ENCODE measurements at regions of chr10 and their contacts with region 1.

Region 1: GRCh38 chr10:124741281-124741921 is 2.8 kb downstream of the FAM53B start:
- DNase-seq: peak; percentile 84
- H3K4me3 Mint-ChIP-seq: peak overlapping the region; percentile 52
- H3K27ac Mint-ChIP-seq: peak overlapping the region; percentile 68
- H3K4me1 Mint-ChIP-seq: peaks cover 68% of the 10 kb centered on the region
- H3K27me3 Mint-ChIP-seq: peaks cover 2% of the 10 kb centered on the region

Region 2: DNA sequence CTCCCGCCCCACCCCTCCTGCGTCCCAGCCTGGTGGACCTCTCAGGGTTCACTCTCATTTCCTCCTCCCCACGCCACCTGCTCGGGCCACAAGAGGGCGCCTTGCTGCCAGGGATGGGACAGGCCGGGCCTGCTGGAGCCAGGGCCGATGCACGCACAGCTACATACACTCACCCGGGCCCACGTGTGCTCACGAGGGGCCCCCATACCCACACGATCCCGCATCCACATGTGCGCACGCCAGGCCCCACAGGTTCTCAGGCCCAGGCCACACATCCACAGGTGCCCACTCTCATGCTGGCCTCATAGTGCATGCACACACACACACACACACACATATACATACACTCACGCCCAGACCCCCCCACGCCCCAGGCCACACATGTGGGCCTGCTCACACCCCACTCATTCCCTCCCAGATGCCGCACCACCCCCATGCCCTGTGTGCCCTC is 211.2 kb before region 1 on chr10:
- CTCF ChIA-PET with region 1: interaction called, 19 read pairs
- intact Hi-C with region 1: loop called (anchors 1 kb)
- DNase-seq: peak; percentile 91
- H3K4me3 Mint-ChIP-seq: no peak overlapping the region
- H3K27ac Mint-ChIP-seq: no peak overlapping the region
- H3K4me1 Mint-ChIP-seq: peaks cover 5% of the 10 kb centered on the region
- H3K27me3 Mint-ChIP-seq: no peaks in the 10 kb centered on the region

Region 3: DNA sequence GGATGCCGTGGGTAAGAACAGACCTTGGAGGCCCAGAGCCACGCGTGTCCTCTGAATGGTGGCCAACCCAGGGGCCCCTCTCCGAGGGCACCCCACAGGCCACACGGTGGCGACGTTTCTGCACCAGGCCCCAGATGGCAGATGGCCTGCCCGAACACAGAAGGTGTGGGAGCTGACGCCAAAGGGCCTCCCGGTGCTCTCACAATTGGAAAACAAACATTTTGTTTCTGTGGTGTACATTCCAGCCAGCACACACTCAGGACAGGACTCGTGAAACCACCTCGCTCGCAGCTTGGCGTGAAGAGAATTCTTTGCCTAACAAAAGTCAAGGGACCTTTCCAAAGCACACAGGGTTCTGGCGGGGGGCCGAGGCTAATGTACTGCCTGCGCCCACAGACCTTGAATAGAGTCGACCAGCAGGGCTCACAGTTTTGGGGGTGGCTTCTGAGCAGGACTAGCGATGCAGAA is 109.3 kb before region 1 on chr10:
- CTCF ChIA-PET with region 1: interaction called, 14 read pairs
- intact Hi-C with region 1: loop called (anchors 1 kb)
- DNase-seq: peak; percentile 52
- H3K4me3 Mint-ChIP-seq: no peak overlapping the region
- H3K27ac Mint-ChIP-seq: no peak overlapping the region
- H3K4me1 Mint-ChIP-seq: peaks cover 32% of the 10 kb centered on the region
- H3K27me3 Mint-ChIP-seq: no peaks in the 10 kb centered on the region

Region 4: DNA sequence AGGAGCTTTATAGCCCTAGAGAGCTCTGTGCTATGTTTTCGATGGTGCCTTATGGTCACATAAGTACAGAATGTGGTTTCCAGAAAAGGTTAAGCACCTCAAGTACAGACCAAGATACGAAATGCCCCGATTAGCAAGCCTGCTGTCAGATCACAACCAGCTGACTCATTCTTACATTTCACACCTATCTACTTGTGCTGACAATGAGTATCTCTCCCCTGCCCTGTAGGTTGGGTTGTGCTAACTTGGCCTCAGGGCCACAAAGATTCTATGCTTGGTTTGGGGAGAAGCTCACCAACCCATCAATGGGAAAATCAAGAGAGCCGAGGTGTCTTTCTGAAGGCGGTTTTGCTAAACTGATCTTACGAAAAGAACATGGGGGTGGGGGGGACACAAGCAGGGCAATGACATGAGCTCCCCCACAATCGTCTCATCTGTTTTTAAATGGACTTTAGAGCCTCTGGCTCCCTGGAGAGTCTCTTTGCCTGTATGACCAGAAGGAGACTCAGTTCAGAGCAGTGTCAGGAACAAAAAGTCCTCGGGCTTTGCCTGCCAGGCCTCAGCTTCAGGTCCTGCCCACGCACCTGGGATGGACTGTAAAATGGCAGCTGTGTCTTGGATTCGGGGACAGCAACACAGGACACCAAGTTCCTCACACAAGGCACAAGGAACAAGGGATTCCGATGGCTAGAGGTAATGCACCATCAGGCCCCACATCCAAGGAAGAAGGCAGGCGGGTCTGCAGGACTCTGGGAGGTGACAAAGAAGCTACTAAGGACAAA is 52.3 kb before region 1 on chr10:
- CTCF ChIA-PET with region 1: interaction called, 27 read pairs
- intact Hi-C with region 1: loop called (anchors 1 kb)
- DNase-seq: peak; percentile 83
- H3K4me3 Mint-ChIP-seq: no peak overlapping the region
- H3K27ac Mint-ChIP-seq: peak overlapping the region; percentile 46
- H3K4me1 Mint-ChIP-seq: peaks cover 74% of the 10 kb centered on the region
- H3K27me3 Mint-ChIP-seq: no peaks in the 10 kb centered on the region

Region 5: GRCh38 chr10:124719213-124719851 is 22.1 kb before region 1 on chr10:
- CTCF ChIA-PET with region 1: interaction called, 138 read pairs
- intact Hi-C with region 1: loop called (anchors 1 kb)
- DNase-seq: peak; percentile 82
- H3K4me3 Mint-ChIP-seq: peak overlapping the region; percentile 64
- H3K27ac Mint-ChIP-seq: peak overlapping the region; percentile 84
- H3K4me1 Mint-ChIP-seq: peaks cover 89% of the 10 kb centered on the region
- H3K27me3 Mint-ChIP-seq: no peaks in the 10 kb centered on the region

Region 6: DNA sequence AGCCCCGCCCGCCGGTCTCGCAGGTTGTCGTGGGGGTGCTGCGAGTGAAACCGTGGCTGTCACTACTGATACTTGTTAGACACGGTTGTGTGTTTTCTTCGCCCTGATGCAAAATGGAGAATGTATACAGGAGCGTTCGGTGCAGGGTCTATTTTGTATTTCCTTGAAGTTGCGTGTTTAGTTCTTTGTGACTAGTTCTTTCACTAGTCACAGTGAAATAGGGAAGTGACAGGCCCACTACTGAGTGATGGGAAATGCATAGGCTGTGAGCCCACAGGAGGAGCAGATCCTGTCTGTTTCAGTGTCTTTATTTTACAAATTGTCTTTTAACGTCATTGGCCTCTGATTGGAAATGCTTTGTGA is 60.9 kb after region 1 on chr10:
- CTCF ChIA-PET with region 1: interaction called, 3 read pairs
- intact Hi-C with region 1: loop called (anchors 1 kb)
- DNase-seq: peak; percentile 44
- H3K4me3 Mint-ChIP-seq: peak overlapping the region; percentile 90
- H3K27ac Mint-ChIP-seq: peak overlapping the region; percentile 83
- H3K4me1 Mint-ChIP-seq: peaks cover 17% of the 10 kb centered on the region
- H3K27me3 Mint-ChIP-seq: no peaks in the 10 kb centered on the region

Measured in activated naive CD4-positive, alpha-beta T cell treated with anti-CD3 and anti-CD28 coated beads for 36 hours (primary cell).